ENCODE measurements at regions of chr3 and their contacts with region 1.

Region 1: GRCh38 chr3:177816667-177817208 is 619.5 kb upstream of the TBL1XR1 start:
- DNase-seq: peak; percentile 75 to 97
- H3K4me3 ChIP-seq: 0 out of 2 replicates have a peak overlapping the region, but pooled peaks have one; percentile 1
- H3K27ac ChIP-seq: peak overlapping the region; percentile 76
- H3K4me1 ChIP-seq: peaks cover 40% of the 10 kb centered on the region
- H3K27me3 ChIP-seq: no peaks in the 10 kb centered on the region
- CTCF ChIP-seq: peak; percentile 46; the same call in 1 of the 2 replicates

Region 2: DNA sequence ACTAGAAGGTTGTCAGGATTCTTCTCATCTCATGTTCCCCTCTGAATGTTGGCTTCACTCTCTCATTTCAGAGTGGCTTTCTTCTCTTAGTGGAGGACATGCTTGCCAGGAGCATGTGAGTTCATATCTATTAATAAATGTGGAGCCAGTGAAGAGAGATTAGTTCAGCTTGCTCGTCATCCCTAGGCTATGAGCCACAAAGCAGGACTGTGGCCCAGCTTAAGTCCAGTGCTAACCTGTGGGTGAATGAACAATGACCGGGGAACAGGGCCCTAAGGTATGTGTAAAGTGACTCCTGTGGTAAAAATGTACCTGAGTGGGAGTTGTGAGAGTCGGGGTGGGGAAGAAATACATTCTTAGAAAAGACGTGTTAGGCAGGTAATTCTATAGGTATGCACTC is 522.5 kb before region 1 on chr3:
- CTCF ChIA-PET with region 1: no interaction called
- POLR2A ChIA-PET with region 1: no interaction called
- intact Hi-C with region 1: loop called (anchors 10 kb)
- DNase-seq: peak; percentile 69 to 71
- H3K4me3 ChIP-seq: no peak overlapping the region
- H3K27ac ChIP-seq: peak overlapping the region; percentile 57; the same call in 1 of the 2 replicates
- H3K4me1 ChIP-seq: peaks cover 23% of the 10 kb centered on the region
- H3K27me3 ChIP-seq: no peaks in the 10 kb centered on the region
- CTCF ChIP-seq: no peak

Region 3: GRCh38 chr3:177441813-177442646 is 374.7 kb before region 1 on chr3:
- CTCF ChIA-PET with region 1: no interaction called
- POLR2A ChIA-PET with region 1: no interaction called
- intact Hi-C with region 1: loop called (anchors 1 kb)
- DNase-seq: no peak
- H3K4me3 ChIP-seq: no peak overlapping the region
- H3K27ac ChIP-seq: no peak overlapping the region
- H3K4me1 ChIP-seq: peaks cover 21% of the 10 kb centered on the region
- H3K27me3 ChIP-seq: no peaks in the 10 kb centered on the region
- CTCF ChIP-seq: no peak

Region 4: DNA sequence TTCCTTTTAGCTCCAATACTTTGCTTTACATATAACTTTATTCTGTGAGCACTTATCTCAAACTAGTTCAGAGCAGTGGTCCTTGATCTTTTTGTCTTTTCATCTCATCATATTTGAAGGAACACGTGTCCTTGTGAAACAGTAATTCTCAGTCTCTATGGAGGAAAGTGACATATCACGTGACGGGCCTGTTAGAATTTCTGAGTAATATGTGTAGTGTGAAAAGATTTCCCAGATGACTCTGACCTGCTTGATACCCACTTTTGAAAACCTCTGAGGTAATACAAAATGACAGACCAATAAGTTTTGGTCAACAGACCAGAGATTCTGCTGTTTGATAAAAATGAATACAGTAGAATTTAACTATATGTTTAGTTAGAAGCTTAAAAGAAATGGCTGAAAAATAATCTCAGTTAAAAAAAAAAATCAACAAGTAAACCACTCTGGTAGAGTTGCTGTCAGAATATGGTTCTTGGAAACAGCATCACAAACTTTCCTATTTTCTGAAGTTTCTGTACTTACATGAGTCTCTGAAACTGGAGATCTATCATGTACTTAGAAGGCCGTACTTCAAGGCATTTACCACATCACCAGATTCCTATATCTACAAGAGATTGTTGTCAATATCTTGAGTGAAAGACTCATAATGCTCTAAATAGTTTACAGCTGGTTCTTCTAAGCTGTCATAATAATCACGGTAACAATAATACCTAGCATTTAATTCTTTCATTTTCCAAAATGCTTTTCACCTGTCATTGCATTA is 29.3 kb before region 1 on chr3:
- CTCF ChIA-PET with region 1: no interaction called
- POLR2A ChIA-PET with region 1: no interaction called
- intact Hi-C with region 1: no loop called
- DNase-seq: no peak
- H3K4me3 ChIP-seq: no peak overlapping the region
- H3K27ac ChIP-seq: no peak overlapping the region
- H3K4me1 ChIP-seq: no peaks in the 10 kb centered on the region
- H3K27me3 ChIP-seq: no peaks in the 10 kb centered on the region
- CTCF ChIP-seq: no peak

Region 5: GRCh38 chr3:177827511-177828207 is 10.9 kb after region 1 on chr3:
- CTCF ChIA-PET with region 1: no interaction called
- POLR2A ChIA-PET with region 1: no interaction called
- intact Hi-C with region 1: no loop called
- DNase-seq: peak; percentile 14 to 93
- H3K4me3 ChIP-seq: peak overlapping the region; percentile 29
- H3K27ac ChIP-seq: peak overlapping the region; percentile 70
- H3K4me1 ChIP-seq: peaks cover 70% of the 10 kb centered on the region
- H3K27me3 ChIP-seq: no peaks in the 10 kb centered on the region
- CTCF ChIP-seq: no peak

Region 6: DNA sequence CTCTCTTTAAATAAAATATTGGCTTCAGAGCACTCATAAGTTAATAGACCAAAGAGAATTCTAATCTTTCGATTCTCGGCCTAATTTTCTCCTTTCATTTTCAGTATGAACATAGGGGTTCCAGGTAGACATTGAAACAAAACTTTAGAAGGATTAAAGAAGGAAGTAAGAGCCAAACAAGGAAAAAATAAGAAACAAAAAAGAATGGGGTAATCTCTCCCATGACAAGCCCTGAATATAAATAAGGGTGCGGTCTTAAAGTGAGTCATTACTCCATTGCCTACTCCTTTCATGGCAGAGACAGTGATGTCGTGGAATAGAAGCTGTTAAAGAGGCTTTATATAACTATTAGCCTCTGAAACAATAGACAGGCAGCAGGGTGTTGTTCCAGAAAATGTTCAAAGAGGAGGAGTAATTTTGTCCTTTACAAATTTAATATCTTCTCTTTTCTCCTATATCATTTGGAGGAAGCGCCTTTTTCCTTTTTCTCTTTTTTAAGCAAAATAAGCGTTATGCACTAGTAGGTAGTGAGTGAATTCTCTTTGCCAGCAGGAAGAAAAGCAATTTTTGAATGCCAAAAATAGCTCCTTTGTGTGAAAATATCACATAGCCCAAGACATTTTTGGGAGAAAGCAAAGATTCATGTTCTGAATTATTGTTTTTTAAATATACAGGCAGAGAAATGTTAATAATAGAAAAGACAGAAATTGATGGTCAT is 111.6 kb after region 1 on chr3:
- CTCF ChIA-PET with region 1: no interaction called
- POLR2A ChIA-PET with region 1: no interaction called
- intact Hi-C with region 1: loop called (anchors 1 kb)
- DNase-seq: peak in 1 of 2 experiments; percentile 81
- H3K4me3 ChIP-seq: no peak overlapping the region
- H3K27ac ChIP-seq: peak overlapping the region; percentile 59
- H3K4me1 ChIP-seq: peaks cover 22% of the 10 kb centered on the region
- H3K27me3 ChIP-seq: no peaks in the 10 kb centered on the region
- CTCF ChIP-seq: no peak

Region 7: GRCh38 chr3:178583963-178584575 is 767.3 kb after region 1 on chr3:
- CTCF ChIA-PET with region 1: no interaction called
- POLR2A ChIA-PET with region 1: no interaction called
- intact Hi-C with region 1: no loop called
- DNase-seq: no peak
- H3K4me3 ChIP-seq: no peak overlapping the region
- H3K27ac ChIP-seq: no peak overlapping the region
- H3K4me1 ChIP-seq: no peaks in the 10 kb centered on the region
- H3K27me3 ChIP-seq: no peaks in the 10 kb centered on the region
- CTCF ChIP-seq: no peak

Measured in PC-9 (cell line).